K562 (cell line): ENCODE measurements at regions of chr1 and their contacts with region 1.

Region 1: DNA sequence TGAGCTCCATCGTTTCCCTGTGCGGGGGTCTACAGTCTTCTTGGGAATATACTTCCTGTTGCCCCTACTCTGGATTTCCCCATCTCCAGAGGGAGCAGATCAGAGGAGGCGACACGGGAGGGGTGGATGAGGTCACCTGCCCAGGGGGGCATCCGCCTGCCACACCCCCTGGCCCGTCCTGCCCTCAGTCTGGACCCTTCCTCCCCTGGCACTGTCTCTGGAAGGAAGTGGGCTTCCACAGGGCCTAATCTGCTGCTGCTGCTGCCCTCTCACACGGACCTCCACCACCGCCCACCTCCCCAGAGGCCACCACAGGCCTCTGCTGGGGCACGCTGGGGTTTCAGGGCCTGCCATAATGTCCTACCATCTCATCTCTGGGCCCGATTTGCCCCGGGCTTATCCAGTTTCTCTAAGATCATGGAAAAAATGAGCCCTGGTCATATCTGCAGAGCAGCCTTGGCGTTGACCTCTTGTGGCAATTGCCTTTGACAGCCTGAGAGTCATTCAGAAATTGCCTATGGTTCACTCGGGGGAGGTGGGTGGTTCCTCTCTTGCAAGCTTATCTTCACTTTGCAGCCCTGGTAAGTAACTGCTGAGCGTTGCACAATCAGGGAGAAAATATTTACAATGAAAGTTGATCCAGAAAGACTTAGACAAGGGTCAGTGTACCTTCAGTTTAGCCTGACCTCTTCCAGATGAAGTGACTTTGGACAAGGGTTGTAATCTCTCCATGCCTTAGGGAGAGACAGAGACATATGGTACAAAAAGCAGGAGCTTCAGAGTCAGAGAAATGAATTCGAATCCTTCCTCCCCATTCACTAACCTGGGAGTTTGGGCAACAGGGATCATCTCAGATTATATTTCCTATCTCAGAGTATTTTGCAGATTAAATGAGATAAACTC is 252.4 kb downstream of the TOMM20 start:
- DNase-seq: peak; percentile 94 to 99 (median 95)
- ATAC-seq: peak; percentile 89
- H3K4me3 ChIP-seq: no peak overlapping the region
- H3K27ac ChIP-seq: peak overlapping the region; percentile 87
- H3K4me1 ChIP-seq: peaks cover 56 to 75% of the 10 kb centered on the region in 2 experiments
- H3K27me3 ChIP-seq: no peaks in the 10 kb centered on the region
- CTCF ChIP-seq: peak in 1 of 3 experiments; percentile 31; a peak in 1 of 6 replicates
- EP300 ChIP-seq: peak; percentile 100
- POLR2A ChIP-seq: no peak
- RAD21 ChIP-seq: peak; percentile 63 to 68

Region 2: GRCh38 chr1:234722904-234723720 is 153.1 kb before region 1 on chr1:
- CTCF ChIA-PET with region 1: no interaction called
- POLR2A ChIA-PET with region 1: interaction called, 10 read pairs
- in situ Hi-C with region 1: no loop called
- intact Hi-C with region 1: no loop called
- DNase-seq: peak; percentile 53 to 65 (median 56)
- ATAC-seq: peak; percentile 4
- H3K4me3 ChIP-seq: peak overlapping the region; percentile 17; the same call in 1 of the 2 replicates
- H3K27ac ChIP-seq: peak overlapping the region; percentile 97
- H3K4me1 ChIP-seq: peaks cover 45 to 70% of the 10 kb centered on the region in 2 experiments
- H3K27me3 ChIP-seq: no peaks in the 10 kb centered on the region
- CTCF ChIP-seq: no peak
- EP300 ChIP-seq: no peak
- POLR2A ChIP-seq: no peak
- RAD21 ChIP-seq: 0 out of 4 replicates have a peak, but pooled peaks of 1 of the 2 experiments have one; percentile 14

Region 3: GRCh38 chr1:234760303-234760723 is 115.9 kb before region 1 on chr1:
- CTCF ChIA-PET with region 1: no interaction called
- POLR2A ChIA-PET with region 1: no interaction called
- in situ Hi-C with region 1: no loop called
- intact Hi-C with region 1: no loop called
- DNase-seq: peak in 1 of 4 experiments; percentile 29
- ATAC-seq: peak; percentile 15; the same call in 2 of the 3 replicates
- H3K4me3 ChIP-seq: no peak overlapping the region
- H3K27ac ChIP-seq: no peak overlapping the region
- H3K4me1 ChIP-seq: peaks cover 11 to 21% of the 10 kb centered on the region in 2 experiments; a peak in 4 of 5 replicates
- H3K27me3 ChIP-seq: peaks cover 0 to 9% of the 10 kb centered on the region in 2 experiments; a peak in 1 of 5 replicates
- CTCF ChIP-seq: no peak
- EP300 ChIP-seq: no peak
- POLR2A ChIP-seq: no peak
- RAD21 ChIP-seq: no peak

Region 4: GRCh38 chr1:234842726-234843641 is 33.2 kb before region 1 on chr1:
- CTCF ChIA-PET with region 1: no interaction called
- POLR2A ChIA-PET with region 1: interaction called, 4 read pairs
- in situ Hi-C with region 1: no loop called
- intact Hi-C with region 1: loop called (anchors 1 kb)
- DNase-seq: peak; percentile 47 to 83 (median 63)
- ATAC-seq: peak; percentile 84
- H3K4me3 ChIP-seq: no peak overlapping the region
- H3K27ac ChIP-seq: peak overlapping the region; percentile 53; the same call in 2 of the 3 replicates
- H3K4me1 ChIP-seq: peaks cover 13 to 49% of the 10 kb centered on the region in 2 experiments
- H3K27me3 ChIP-seq: no peaks in the 10 kb centered on the region
- CTCF ChIP-seq: peak in 2 of 3 experiments; percentile 4 to 28; a peak in 2 of 6 replicates
- EP300 ChIP-seq: peak; percentile 33; the same call in 1 of the 2 replicates
- POLR2A ChIP-seq: no peak
- RAD21 ChIP-seq: peak; percentile 11 to 50; a peak in 2 of 4 replicates

Region 5: DNA sequence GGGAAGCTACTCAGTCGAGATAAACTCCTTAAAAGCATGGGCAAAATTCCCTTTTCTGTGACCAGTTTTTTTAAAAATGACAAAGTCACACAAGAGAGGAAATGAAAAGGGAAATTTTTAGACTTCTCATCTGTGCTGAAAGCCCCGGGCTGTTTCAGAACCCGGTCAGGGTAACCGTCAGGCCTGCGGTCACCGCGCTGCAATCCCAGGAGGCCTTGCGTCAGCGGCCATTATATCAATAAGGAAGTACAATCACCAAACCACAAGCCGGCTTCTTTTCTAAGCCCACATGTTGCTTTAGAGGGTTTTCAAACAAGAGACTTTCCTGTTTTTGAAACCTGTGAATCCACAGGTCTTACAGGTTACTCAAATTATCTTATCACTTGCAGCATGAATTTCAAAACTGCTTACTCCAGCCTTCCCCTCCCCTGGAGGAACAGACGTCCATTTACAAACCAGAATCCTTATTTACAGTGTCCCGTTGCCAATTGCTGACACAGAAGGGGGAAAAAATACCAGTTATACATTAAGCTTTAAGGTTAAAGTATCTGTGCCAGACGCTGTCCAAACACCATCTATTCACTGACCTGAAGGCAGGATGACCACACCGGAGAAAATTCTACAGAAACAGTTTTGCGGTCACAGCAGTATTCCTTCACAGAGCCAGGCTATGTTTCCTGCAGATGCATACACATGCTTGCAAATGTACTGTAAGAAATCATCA is 87.1 kb after region 1 on chr1:
- CTCF ChIA-PET with region 1: no interaction called
- POLR2A ChIA-PET with region 1: no interaction called
- in situ Hi-C with region 1: no loop called
- intact Hi-C with region 1: loop called (anchors 2 kb)
- DNase-seq: peak; percentile 60 to 80 (median 70)
- ATAC-seq: peak; percentile 64
- H3K4me3 ChIP-seq: no peak overlapping the region
- H3K27ac ChIP-seq: peak overlapping the region; percentile 82
- H3K4me1 ChIP-seq: peaks cover 27 to 66% of the 10 kb centered on the region in 2 experiments
- H3K27me3 ChIP-seq: no peaks in the 10 kb centered on the region
- CTCF ChIP-seq: no peak
- EP300 ChIP-seq: peak; percentile 75
- POLR2A ChIP-seq: no peak
- RAD21 ChIP-seq: peak in 1 of 2 experiments; percentile 18; a peak in 2 of 4 replicates